Heart left ventricle (tissue), 16 donors: ENCODE measurements at regions of chr11 and their contacts with region 1.

Region 1: DNA sequence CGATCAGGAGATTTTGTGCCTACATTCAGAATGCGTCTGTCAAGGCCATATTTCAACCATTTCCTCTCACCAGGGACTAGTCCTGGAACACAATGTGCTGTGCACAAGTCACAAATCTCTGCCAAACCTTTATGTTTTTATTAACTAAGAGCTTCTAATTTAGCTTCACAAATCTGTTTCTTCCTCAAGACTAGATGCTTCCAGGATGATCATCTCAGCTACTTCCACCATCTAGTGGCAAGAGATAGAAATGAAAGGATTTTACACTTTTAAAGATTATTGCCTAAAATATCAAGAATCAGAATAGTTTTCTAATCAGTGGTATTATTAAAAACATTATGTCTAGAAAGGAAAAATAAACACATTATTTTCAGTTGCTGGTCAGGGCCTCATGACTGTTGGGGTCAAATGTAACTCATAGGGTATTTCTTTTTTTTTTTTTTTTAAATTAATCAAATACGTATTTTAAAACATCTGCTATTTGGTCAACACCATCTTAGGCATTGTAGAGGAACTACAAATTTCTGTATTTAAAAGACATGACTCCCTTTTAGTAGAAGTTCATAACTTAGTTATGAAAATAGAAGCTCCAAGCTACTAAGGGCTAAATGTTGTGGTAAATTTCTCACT is 1102.6 kb downstream of the DLG2 start:
- DNase-seq: no peak
- ATAC-seq: no peak
- H3K4me3 ChIP-seq: no peak overlapping the region
- H3K27ac ChIP-seq: no peak overlapping the region
- H3K4me1 ChIP-seq: no peaks in the 10 kb centered on the region
- H3K27me3 ChIP-seq: no peaks in the 10 kb centered on the region
- CTCF ChIP-seq: peak in 11 of 12 donors; percentile 14 to 54 (median 33)
- POLR2A ChIP-seq: no peak

Region 2: GRCh38 chr11:83827940-83828554 is 696.5 kb before region 1 on chr11:
- intact Hi-C with region 1: loop called in 5 of 10 experiments (anchors 5 to 10 kb)
- DNase-seq: no peak
- ATAC-seq: peak in 2 of 4 donors; percentile 34 to 49
- H3K4me3 ChIP-seq: peak overlapping the region in 5 of 12 donors; percentile 8 to 50 (median 34)
- H3K27ac ChIP-seq: no peak overlapping the region
- H3K4me1 ChIP-seq: peaks cover 0 to 5% (median 0%) of the 10 kb centered on the region in 12 donors
- H3K27me3 ChIP-seq: no peaks in the 10 kb centered on the region
- CTCF ChIP-seq: peak; percentile 25 to 67 (median 52)
- POLR2A ChIP-seq: no peak

Region 3: DNA sequence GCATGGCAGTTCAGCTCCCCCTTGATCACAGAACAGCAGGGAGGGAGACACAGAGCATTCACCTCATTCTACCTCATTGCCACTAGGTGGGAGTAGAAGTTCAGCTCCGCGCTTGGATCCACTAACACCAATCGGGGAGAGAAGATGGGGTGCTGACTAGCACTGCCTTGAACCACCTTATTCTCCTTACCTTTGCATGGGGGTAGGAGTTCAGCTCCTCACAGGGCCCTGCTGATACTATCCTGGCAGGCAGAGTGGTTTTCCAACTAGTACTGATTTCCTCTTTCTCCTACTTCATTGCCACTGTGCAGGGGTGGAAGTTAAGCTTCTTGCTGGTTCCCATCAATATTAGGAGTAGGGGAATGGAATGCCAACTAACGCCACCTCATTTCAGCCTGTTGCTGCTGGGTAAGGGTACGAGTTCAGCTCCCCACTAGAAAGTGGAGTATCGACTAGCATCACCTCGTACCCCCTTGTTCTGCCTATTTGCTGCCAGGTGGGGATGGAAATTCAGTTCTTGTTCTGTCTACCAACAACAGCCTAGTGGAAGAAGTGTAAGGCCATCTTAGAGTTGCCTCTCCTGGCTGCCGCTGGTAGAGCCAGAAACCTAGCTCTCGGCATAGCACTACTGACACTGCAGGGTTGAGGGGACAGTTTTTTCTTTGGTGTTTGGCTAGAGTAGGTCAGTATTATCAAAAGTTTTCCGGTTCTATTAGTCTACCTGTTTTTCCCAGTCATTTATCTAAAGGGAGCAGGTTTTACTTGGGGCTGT is 687.5 kb before region 1 on chr11:
- intact Hi-C with region 1: loop called in 6 of 10 experiments (anchors 5 to 10 kb)
- DNase-seq: peak in 4 of 5 donors; percentile 9 to 37 (median 28)
- ATAC-seq: peak; percentile 61 to 94 (median 86)
- H3K4me3 ChIP-seq: no peak overlapping the region
- H3K27ac ChIP-seq: no peak overlapping the region
- H3K4me1 ChIP-seq: no peaks in the 10 kb centered on the region
- H3K27me3 ChIP-seq: no peaks in the 10 kb centered on the region
- CTCF ChIP-seq: peak; percentile 34 to 72 (median 62)
- POLR2A ChIP-seq: no peak

Region 4: GRCh38 chr11:84384731-84385130 is 139.8 kb before region 1 on chr11:
- intact Hi-C with region 1: loop called in 4 of 10 experiments (anchors 10 kb)
- DNase-seq: peak in 2 of 5 donors; percentile 24 to 26
- ATAC-seq: no peak
- H3K4me3 ChIP-seq: no peak overlapping the region
- H3K27ac ChIP-seq: no peak overlapping the region
- H3K4me1 ChIP-seq: no peaks in the 10 kb centered on the region
- H3K27me3 ChIP-seq: no peaks in the 10 kb centered on the region
- CTCF ChIP-seq: peak; percentile 68 to 83 (median 78)
- POLR2A ChIP-seq: no peak

Region 5: DNA sequence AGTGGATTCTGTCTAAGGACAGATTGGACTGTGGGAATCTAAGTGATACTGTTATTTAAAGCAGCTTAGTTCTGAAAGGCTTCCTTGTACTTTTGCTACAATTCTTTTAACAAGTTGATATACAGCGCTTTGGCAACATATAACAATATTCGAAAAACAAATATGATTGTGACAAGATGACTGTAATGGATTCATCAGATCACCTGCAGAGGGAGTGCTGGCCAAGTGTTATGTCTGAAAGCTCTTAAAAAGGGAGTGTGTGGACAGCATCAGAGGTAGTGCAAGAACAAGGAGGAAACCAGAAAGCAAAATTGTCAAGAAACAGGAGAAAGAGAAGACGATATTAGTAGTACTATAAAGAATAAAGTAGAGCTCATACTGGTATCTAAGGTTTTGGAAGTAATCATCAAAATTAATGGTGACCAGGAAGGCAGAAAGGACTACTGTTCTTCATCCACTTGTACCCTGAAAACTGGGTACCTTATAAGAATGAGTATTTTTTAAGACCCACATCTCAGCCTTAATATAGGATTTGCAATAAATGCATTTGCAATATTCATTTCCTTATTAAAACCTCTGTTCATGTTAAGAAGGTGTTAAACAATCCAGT is 126.4 kb before region 1 on chr11:
- intact Hi-C with region 1: loop called in 3 of 10 experiments (anchors 5 to 10 kb)
- DNase-seq: no peak
- ATAC-seq: no peak
- H3K4me3 ChIP-seq: no peak overlapping the region
- H3K27ac ChIP-seq: no peak overlapping the region
- H3K4me1 ChIP-seq: no peaks in the 10 kb centered on the region
- H3K27me3 ChIP-seq: no peaks in the 10 kb centered on the region
- CTCF ChIP-seq: peak in 5 of 12 donors; percentile 18 to 31 (median 21)
- POLR2A ChIP-seq: no peak